Left lung (tissue), 14 donors: ENCODE measurements at regions of chr19 and their contacts with region 1.

Region 1: DNA sequence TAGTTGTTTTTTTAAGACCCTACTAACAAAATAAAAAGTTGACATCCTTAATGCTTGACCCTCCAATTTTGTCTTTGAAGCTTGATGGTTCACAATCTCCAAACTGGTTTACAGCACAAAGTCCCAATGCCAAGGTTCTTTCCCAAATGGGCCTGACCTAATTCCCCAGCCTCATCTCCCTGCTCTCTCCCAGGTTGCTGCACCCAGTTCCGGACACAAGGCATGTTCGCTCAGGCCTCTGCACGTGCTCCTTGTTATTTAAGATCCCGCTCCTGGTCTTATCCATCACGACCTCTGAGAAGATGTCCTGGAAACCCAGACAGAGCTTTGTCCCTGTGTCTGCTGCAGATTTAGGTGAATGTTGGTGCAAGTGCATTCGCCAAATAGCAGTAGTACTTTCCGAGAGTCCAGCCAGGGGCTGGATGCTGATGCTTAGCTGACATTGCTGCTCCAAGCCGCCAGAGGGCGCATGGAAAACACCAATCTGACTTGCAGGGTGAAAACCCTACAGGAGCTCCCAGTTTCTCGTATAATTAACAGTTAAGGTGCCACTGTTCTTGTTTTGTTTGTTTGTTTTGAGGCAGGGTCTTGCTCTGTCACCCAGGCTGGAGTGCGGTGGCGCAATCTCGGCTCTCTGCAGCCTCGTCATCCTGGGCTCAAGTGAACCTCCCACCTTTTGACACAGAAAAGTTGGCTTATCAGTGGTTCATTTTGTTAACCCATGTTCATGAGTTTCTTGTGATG is 18.5 kb downstream of the LYPD3 start:
- DNase-seq: peak; percentile 56 to 92 (median 82)
- ATAC-seq: peak; percentile 95
- H3K4me3 ChIP-seq: no peak overlapping the region
- H3K27ac ChIP-seq: no peak overlapping the region
- H3K4me1 ChIP-seq: peaks cover 0 to 13% of the 10 kb centered on the region in 2 donors
- H3K27me3 ChIP-seq: no peaks in the 10 kb centered on the region
- CTCF ChIP-seq: peak; percentile 81 to 97

Region 2: GRCh38 chr19:43354305-43354627 is 92.7 kb before region 1 on chr19:
- intact Hi-C with region 1: no loop called
- DNase-seq: no peak
- ATAC-seq: no peak
- H3K4me3 ChIP-seq: peak overlapping the region in 1 of 2 donors; percentile 7
- H3K27ac ChIP-seq: peak overlapping the region in 1 of 2 donors; percentile 31
- H3K4me1 ChIP-seq: no peaks in the 10 kb centered on the region
- H3K27me3 ChIP-seq: peaks cover 4 to 40% of the 10 kb centered on the region in 2 donors
- CTCF ChIP-seq: no peak

Region 3: GRCh38 chr19:43519436-43520088 is 72.6 kb after region 1 on chr19:
- intact Hi-C with region 1: loop called (anchors 5 to 10 kb)
- DNase-seq: peak; percentile 75 to 91 (median 84)
- ATAC-seq: peak; percentile 96
- H3K4me3 ChIP-seq: no peak overlapping the region
- H3K27ac ChIP-seq: no peak overlapping the region
- H3K4me1 ChIP-seq: peaks cover 4 to 16% of the 10 kb centered on the region in 2 donors
- H3K27me3 ChIP-seq: no peaks in the 10 kb centered on the region
- CTCF ChIP-seq: peak; percentile 83 to 90

Region 4: DNA sequence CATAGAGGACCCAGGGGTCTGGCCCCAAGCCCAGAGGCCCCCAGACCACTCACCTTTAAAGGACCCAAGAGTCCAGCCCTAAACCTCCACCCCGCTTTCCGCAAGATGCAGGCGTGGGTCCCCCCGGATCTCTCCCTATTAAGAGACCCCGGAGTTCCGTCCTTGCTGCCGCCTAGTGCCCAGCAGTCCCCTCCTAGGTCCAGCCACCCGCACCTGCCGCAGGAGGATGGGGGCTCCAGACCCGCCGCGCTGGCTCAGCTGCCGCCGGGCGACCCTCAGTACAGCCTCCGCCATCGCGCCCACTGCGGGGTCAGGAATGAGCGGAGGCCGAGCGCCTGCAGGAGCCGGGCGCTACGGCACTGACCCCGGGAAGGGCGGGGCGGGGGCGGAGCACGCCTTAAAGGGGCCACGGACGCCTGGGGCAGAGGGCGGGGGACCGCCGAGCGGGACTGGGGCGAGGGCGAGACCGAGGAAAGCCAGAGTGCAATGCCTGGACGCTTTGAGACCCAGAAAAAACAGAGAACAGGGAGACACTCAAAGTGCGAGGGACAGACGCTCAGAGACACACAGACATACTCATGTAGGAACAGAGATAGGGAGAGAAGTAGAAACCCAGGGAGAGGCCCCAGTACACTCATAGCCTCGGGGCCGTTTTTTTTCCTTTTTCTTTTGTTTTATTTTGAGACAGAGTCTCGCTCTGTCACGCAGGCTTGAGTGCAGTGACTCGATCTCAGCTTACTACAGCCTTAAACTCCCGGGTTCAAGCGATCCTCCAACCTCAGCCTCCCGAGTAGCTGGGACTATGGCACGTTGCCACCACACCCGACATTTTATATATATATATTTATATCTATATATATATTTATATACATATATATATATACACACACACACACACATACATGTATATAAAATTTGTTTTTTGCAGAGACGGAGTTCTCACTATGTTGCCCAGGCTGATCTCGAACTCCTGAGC is 80.3 kb after region 1 on chr19 and contains the start of gene ETHE1:
- intact Hi-C with region 1: loop called in 1 of 2 experiments (anchors 10 kb)
- DNase-seq: peak; percentile 69 to 99 (median 81)
- ATAC-seq: peak; percentile 93
- H3K4me3 ChIP-seq: peak within 1 kb of the TSS; percentile 83 to 92
- H3K27ac ChIP-seq: peak within 1 kb of the TSS; percentile 82 to 84
- H3K4me1 ChIP-seq: peaks cover 19 to 32% of the 10 kb centered on the region in 2 donors
- H3K27me3 ChIP-seq: no peaks in the 10 kb centered on the region
- CTCF ChIP-seq: no peak
- polyA plus RNA-seq, gene ETHE1: 17.1 to 20.5 (median 19.9) TPM

Region 5: DNA sequence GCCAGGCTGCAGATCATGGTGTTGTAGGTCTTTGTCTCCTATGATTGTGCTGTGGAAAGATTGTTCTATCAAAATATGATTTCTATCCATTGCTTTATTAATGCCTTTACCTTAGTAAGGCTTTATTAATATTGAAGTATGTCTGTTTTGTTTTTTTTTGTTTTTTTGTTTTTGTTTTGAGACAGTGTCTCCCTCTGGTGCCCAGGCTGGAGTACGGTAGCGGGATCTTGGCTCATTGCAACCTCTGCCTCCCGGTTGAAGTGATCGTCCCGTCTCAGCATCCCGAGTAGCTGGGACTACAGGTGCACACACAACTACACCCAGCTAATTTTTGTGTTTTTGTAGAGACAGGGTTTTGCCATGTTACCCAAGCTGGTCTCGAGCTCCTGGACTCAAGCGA is 276.7 kb after region 1 on chr19:
- intact Hi-C with region 1: no loop called
- DNase-seq: no peak
- ATAC-seq: no peak
- H3K4me3 ChIP-seq: no peak overlapping the region
- H3K27ac ChIP-seq: no peak overlapping the region
- H3K4me1 ChIP-seq: peaks cover 0 to 26% of the 10 kb centered on the region in 2 donors
- H3K27me3 ChIP-seq: no peaks in the 10 kb centered on the region
- CTCF ChIP-seq: peak in 1 of 2 donors; percentile 31